ENCODE measurements at regions of chr2 and their contacts with region 1.

Region 1: DNA sequence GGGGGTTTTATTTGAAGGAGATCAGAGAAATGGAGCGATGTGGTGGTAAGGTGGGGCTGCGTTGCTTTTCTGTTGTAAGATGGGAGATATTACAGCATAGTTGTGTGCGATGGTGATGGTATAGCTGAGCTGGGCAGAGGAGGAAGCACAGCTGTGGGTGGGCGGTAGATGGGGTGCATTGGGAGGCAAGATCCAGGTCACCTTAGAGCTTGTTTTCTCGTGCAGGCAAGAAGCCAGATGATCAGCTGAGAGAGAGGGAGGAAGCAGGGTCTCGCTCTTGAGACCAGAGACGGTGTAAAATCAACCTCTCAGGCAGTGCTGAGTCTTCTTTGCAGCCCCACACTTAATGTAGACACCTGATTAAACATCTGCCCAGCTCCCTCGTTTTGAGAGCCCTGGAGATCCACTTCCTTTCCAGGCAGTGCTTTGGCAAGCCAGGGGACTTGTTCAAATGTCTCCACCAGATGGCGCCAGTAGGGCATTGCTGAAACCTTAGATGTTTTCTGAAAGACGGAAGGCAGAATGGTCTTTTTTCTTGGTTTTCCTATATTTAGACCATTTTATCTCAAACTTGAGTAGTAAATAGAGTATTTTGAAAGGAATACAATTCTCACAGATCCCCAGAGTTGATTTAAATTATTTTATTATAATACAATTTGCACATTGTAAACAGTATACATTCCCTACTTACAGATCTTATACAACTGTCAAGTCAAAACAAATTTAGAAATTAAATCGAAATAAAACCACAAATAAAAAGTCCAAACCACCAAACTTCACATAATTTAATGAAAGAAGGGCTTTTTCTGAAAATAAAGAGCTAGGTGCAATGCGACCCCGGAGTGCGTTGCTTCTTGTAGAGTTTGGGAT is 21.1 kb upstream of the LYPD6B start:
- DNase-seq: peak; percentile 87

Region 2: DNA sequence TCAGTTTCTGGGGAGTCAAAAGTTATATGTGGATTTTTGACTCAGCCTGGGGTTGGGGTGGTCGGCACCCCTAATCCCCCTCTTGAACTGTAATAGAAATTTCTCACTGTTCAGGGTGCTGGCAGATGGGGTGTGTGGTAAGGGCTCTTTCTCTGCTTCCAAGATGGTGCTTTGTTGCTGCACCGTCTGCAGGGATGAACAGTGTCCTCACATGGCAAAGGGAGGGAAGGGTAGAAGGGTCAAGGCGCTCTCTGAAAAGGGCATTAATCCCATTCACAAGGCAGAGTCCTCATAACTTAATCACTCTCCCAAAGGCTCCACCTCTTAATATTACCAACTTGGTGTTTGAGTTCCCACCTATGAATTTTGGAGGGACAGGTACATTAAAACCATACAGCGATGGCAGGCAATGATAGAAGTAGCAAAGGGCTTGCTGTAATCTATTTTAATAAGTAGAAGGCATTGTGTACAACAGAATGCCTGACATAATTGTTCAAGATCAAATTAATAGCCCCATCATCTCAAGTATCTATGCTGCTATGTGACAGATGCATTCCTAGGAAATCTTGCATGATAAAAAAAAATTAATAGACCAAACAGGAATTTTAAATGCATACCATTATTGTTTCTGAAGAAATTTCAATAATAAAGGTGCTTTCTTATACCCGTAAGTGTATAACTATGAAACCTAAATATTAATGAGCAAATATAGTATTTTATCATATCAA is 542.2 kb after region 1 on chr2:
- intact Hi-C with region 1: loop called (anchors 2 kb)
- DNase-seq: no peak

Measured in cardiac septum (tissue), 1 donor.